Mammary epithelial cell (primary cell): ENCODE measurements at regions of chr16 and their contacts with region 1.

Region 1: DNA sequence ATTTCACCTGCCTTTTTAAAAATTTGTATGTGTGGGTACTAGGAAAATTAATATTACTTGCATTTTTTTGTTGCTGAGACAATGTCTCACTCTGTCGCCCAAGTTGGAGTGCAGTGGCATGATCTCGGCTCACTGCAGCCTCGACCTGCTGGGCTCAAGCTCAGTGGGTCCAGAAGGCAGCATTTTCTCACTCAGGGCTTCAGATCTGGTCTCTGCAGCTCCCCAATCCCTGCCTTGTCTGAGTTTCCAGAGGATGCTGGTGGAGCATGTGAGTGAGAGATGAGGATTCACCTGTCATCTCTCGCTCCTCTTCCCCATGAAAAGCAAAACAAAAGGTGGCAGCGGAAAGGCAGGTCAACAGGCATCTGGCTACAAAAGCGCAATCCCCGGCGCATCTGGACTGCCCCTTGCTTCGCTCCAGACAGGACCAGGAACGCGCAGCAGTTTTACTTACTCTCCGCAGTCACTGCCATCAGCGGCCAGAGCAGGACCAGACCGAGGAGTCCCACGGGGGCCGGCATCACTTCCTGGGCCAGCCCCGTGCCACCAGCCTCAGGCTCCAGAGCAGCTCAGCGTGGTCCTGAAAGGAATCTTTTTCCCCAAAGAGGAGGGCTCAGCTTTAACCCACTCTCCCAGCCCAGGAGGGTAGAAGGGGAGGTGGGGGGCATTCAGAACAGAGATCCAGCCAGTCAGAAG is 59.9 kb downstream of the LITAF start:
- DNase-seq: no peak
- H3K4me3 ChIP-seq: no peak overlapping the region
- H3K27ac ChIP-seq: no peak overlapping the region
- H3K4me1 ChIP-seq: peaks cover 6% of the 10 kb centered on the region
- H3K27me3 ChIP-seq: no peaks in the 10 kb centered on the region
- CTCF ChIP-seq: no peak

Region 2: GRCh38 chr16:11407047-11407982 is 119.5 kb before region 1 on chr16:
- CTCF ChIA-PET with region 1: no interaction called
- dilution Hi-C with region 1: no loop called
- in situ Hi-C with region 1: loop called (anchors 5 to 10 kb)
- intact Hi-C with region 1: loop called (anchors 1 kb)
- DNase-seq: peak; percentile 65
- H3K4me3 ChIP-seq: no peak overlapping the region
- H3K27ac ChIP-seq: no peak overlapping the region
- H3K4me1 ChIP-seq: no peaks in the 10 kb centered on the region
- H3K27me3 ChIP-seq: no peaks in the 10 kb centered on the region
- CTCF ChIP-seq: peak; percentile 76 to 77

Region 3: DNA sequence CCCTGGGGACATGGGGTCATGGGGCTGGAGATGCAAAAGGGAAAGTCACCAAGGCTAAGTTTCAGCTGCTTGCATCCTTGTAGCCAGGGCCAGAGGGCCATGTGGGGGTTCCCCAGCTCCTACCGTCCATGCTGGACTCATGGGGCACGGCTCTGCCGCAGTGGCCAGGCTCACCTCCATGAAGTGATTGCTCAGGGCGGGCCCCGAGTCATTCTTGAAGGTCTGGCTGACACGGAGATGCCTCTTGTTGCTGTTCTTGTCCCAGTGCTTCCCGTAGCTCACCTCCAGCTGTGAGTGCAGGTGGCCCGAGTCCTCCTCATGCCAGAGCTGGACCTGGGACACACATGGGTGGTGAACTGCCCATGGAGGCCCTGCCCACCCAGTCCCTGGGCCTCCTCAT is 67.1 kb before region 1 on chr16:
- CTCF ChIA-PET with region 1: no interaction called
- dilution Hi-C with region 1: no loop called
- in situ Hi-C with region 1: no loop called
- intact Hi-C with region 1: no loop called
- DNase-seq: no peak
- H3K4me3 ChIP-seq: no peak overlapping the region
- H3K27ac ChIP-seq: no peak overlapping the region
- H3K4me1 ChIP-seq: no peaks in the 10 kb centered on the region
- H3K27me3 ChIP-seq: peaks cover under 1% of the 10 kb centered on the region
- CTCF ChIP-seq: no peak

Region 4: DNA sequence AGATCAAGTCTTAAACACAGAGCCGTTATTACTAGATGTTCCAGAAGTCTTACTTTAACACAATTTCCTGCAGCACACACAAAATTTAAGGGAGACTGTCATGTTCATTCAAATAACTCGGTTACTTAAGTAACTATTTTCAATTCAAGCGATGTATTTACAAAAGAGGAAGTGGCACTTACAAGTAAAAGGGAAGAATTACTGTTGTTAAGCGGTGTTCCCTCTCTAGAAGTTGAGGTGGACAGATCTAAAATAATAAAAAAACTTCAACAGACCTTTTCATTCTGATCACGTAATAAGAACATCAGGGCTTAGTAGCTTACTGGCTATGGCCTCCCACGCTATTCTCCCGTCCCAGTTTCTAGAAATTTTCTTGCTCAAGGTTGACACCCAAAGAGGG is 242.0 kb after region 1 on chr16:
- CTCF ChIA-PET with region 1: no interaction called
- dilution Hi-C with region 1: no loop called
- in situ Hi-C with region 1: no loop called
- intact Hi-C with region 1: no loop called
- DNase-seq: no peak
- H3K4me3 ChIP-seq: no peak overlapping the region
- H3K27ac ChIP-seq: no peak overlapping the region
- H3K4me1 ChIP-seq: no peaks in the 10 kb centered on the region
- H3K27me3 ChIP-seq: no peaks in the 10 kb centered on the region
- CTCF ChIP-seq: no peak